ENCODE measurements at regions of chr2 and their contacts with region 1.

Region 1: GRCh38 chr2:181953881-181954537 is 31.6 kb upstream of the PPP1R1C start:
- DNase-seq: peak; percentile 36 to 76 (median 64)
- ATAC-seq: peak; percentile 84
- H3K4me3 ChIP-seq: no peak overlapping the region
- H3K4me3 Mint-ChIP-seq: peak overlapping the region; percentile 35
- H3K27ac ChIP-seq: no peak overlapping the region
- H3K27ac Mint-ChIP-seq: no peak overlapping the region
- H3K4me1 ChIP-seq: peaks cover 3% of the 10 kb centered on the region
- H3K4me1 Mint-ChIP-seq: peaks cover 10% of the 10 kb centered on the region
- H3K27me3 ChIP-seq: no peaks in the 10 kb centered on the region
- H3K27me3 Mint-ChIP-seq: peaks cover 11% of the 10 kb centered on the region
- CTCF ChIP-seq: peak; percentile 47

Region 2: GRCh38 chr2:180125245-180125962 is 1828.6 kb before region 1 on chr2:
- CTCF ChIA-PET with region 1: no interaction called
- POLR2A ChIA-PET with region 1: no interaction called
- intact Hi-C with region 1: loop called (anchors 10 kb)
- DNase-seq: peak; percentile 3 to 72 (median 35)
- ATAC-seq: peak; percentile 75
- H3K4me3 ChIP-seq: no peak overlapping the region
- H3K4me3 Mint-ChIP-seq: no peak overlapping the region
- H3K27ac ChIP-seq: no peak overlapping the region
- H3K27ac Mint-ChIP-seq: no peak overlapping the region
- H3K4me1 ChIP-seq: no peaks in the 10 kb centered on the region
- H3K4me1 Mint-ChIP-seq: peaks cover 2% of the 10 kb centered on the region
- H3K27me3 ChIP-seq: no peaks in the 10 kb centered on the region
- H3K27me3 Mint-ChIP-seq: peaks cover 11% of the 10 kb centered on the region
- CTCF ChIP-seq: no peak

Region 3: GRCh38 chr2:181077128-181077709 is 876.8 kb before region 1 on chr2:
- CTCF ChIA-PET with region 1: no interaction called
- POLR2A ChIA-PET with region 1: no interaction called
- intact Hi-C with region 1: loop called in 1 of 2 experiments (anchors 5 kb)
- DNase-seq: peak in 3 of 9 experiments; percentile 8 to 82 (median 76)
- ATAC-seq: peak; percentile 94
- H3K4me3 ChIP-seq: no peak overlapping the region
- H3K4me3 Mint-ChIP-seq: no peak overlapping the region
- H3K27ac ChIP-seq: no peak overlapping the region
- H3K27ac Mint-ChIP-seq: no peak overlapping the region
- H3K4me1 ChIP-seq: no peaks in the 10 kb centered on the region
- H3K4me1 Mint-ChIP-seq: no peaks in the 10 kb centered on the region
- H3K27me3 ChIP-seq: no peaks in the 10 kb centered on the region
- H3K27me3 Mint-ChIP-seq: no peaks in the 10 kb centered on the region
- CTCF ChIP-seq: peak; percentile 90

Region 4: DNA sequence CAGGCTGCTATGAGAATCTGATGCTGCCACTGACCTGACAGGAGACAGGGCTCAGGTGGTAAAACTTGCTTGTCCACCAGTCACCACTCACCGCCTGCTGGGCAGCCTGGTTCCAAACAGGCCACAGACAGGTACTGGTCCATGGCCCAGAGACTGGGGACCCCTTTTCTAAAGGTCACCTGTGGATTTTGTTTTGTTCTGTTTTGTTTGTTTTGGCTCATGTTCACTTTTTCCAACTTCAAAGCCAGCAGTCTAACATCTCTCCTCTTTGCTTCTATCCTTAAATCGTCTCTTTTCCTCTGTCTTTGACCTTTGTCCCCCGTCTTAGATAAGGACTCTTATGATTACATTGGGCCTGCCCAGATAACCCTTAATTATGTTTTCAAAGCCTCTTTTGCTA is 293.8 kb before region 1 on chr2:
- CTCF ChIA-PET with region 1: no interaction called
- POLR2A ChIA-PET with region 1: no interaction called
- intact Hi-C with region 1: no loop called
- DNase-seq: no peak
- ATAC-seq: no peak
- H3K4me3 ChIP-seq: no peak overlapping the region
- H3K4me3 Mint-ChIP-seq: no peak overlapping the region
- H3K27ac ChIP-seq: no peak overlapping the region
- H3K27ac Mint-ChIP-seq: no peak overlapping the region
- H3K4me1 ChIP-seq: peaks cover 14% of the 10 kb centered on the region
- H3K4me1 Mint-ChIP-seq: peaks cover 8% of the 10 kb centered on the region
- H3K27me3 ChIP-seq: peaks cover 0 to 8% of the 10 kb centered on the region in 2 experiments
- H3K27me3 Mint-ChIP-seq: peaks cover 20% of the 10 kb centered on the region
- CTCF ChIP-seq: no peak

Region 5: DNA sequence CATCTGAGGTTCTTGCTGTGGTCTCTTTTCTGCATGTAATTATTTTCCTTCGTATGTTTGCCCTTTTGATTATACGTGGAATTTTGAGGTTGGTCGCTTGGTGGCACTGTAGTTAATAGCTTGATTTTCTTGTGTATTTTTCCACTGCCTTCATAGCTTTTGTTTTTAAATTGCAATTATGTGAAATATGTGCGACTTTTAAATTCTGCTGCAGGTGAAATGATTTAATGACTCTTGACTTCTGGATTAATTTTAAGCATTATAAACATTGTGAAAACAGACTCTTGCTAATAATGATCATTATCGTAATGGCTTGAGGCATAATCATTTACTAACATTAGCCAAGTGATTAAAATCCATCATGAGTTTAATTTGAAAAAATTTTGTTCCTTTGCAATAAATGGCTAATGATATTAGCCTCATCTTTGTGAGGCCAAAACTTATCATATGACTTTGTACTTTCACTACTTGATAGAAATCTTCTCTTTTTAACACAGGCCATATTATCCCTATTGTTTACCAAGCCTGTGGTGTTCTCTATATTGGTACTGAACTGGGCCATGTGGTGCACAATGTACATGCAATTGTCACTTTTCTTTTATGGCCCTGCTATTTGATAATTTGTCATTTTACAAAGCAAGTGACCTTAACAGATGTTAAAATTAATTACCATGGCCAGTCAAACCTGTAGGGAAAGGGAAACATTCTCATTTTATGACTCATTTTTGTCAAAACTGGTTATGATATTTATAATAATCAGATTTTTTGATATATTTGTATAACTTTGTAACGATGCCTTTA is 210.9 kb before region 1 on chr2:
- CTCF ChIA-PET with region 1: interaction called, 20 read pairs
- POLR2A ChIA-PET with region 1: no interaction called
- intact Hi-C with region 1: loop called (anchors 1 to 2 kb)
- DNase-seq: peak in 6 of 9 experiments; percentile 6 to 60 (median 20)
- ATAC-seq: no peak
- H3K4me3 ChIP-seq: no peak overlapping the region
- H3K4me3 Mint-ChIP-seq: no peak overlapping the region
- H3K27ac ChIP-seq: no peak overlapping the region
- H3K27ac Mint-ChIP-seq: no peak overlapping the region
- H3K4me1 ChIP-seq: no peaks in the 10 kb centered on the region
- H3K4me1 Mint-ChIP-seq: no peaks in the 10 kb centered on the region
- H3K27me3 ChIP-seq: no peaks in the 10 kb centered on the region
- H3K27me3 Mint-ChIP-seq: peaks cover 4% of the 10 kb centered on the region
- CTCF ChIP-seq: peak; percentile 54